Gastrocnemius medialis (tissue), 4 donors: ENCODE measurements at regions of chr11 and their contacts with region 1.

Region 1: DNA sequence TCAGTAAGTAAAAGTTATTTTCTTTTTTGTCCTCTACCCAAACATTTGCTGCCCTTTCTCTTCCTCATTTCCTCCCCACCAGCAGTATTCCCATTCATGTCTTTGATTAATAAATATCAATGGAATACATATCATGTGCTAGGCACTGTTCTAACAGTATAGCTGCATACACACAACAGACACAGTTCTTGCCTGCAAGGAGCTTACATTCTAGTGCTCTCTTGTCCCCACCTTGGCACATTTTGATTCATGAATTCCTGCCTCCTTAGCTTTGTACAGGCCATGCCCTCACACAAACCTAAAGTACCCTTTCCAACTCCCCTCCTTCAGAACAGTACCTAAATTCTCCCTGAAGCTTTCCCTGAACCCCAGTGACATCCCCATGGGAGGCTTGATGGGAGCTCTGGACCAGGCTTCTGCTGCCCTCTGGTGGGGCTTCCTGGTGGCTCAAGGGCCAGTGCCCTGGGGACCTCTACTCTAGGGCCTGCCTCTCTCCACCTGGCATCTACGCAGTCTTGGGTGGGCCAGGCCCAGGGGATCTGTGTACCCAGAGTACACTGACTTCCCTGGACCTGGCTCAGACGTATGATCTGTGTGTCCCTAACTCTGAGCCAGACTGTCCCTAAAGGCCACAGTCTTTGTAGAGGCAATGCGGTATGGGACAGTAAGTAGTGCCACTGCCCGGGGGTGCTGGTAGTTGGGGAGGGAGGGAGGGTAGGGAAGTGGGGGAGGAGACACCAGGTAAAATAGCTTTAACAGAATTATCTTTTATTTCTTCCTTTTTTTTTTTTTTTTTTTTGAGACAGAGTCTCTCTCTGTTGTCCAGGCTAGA is 14.1 kb downstream of the RPS13 start:
- DNase-seq: peak in 1 of 2 donors; percentile 31
- ATAC-seq: peak; percentile 68 to 80
- H3K4me3 ChIP-seq: no peak overlapping the region
- H3K27ac ChIP-seq: no peak overlapping the region
- H3K4me1 ChIP-seq: no peaks in the 10 kb centered on the region
- H3K27me3 ChIP-seq: no peaks in the 10 kb centered on the region
- CTCF ChIP-seq: peak; percentile 48 to 85 (median 77)
- POLR2A ChIP-seq: no peak

Region 2: DNA sequence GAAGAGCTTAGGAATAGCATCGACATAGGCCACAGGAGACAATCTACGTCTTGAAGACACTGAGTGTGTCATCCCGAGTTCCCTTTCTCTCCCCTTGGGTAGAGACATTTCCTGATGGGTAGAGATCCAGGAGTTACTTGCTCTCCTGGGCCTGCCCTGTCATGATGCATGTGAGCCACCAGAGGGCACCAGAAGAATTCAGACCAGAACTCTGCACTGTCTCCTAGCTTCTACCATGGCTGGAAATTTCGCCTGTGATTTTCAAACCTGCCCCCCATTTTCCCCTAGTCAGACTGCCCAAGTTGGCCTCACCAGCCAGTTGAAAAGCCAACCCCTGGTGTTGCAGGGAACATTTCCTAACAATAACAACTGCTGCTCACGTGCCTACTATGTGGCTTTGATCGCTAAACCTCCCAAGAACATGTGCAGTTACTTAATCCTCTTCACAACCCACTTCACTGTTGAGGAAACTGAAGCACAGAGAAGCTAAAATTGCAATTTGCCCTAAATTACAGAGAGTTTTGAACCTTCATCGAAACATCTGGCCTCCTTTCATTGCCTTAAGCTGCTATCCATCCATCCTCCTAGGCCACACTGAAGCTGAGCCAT is 277.8 kb before region 1 on chr11:
- in situ Hi-C with region 1: loop called in 1 of 4 experiments (anchors 10 kb)
- intact Hi-C with region 1: loop called (anchors 2 kb)
- DNase-seq: peak; percentile 46 to 56
- ATAC-seq: peak; percentile 78
- H3K4me3 ChIP-seq: no peak overlapping the region
- H3K27ac ChIP-seq: no peak overlapping the region
- H3K4me1 ChIP-seq: peaks cover 3% of the 10 kb centered on the region in 2 donors
- H3K27me3 ChIP-seq: no peaks in the 10 kb centered on the region
- CTCF ChIP-seq: peak; percentile 62 to 85 (median 75)
- POLR2A ChIP-seq: no peak

Region 3: GRCh38 chr11:16791191-16791961 is 272.0 kb before region 1 on chr11:
- in situ Hi-C with region 1: loop called in 1 of 4 experiments (anchors 10 kb)
- intact Hi-C with region 1: loop called (anchors 2 kb)
- DNase-seq: no peak
- ATAC-seq: peak; percentile 43 to 55
- H3K4me3 ChIP-seq: no peak overlapping the region
- H3K27ac ChIP-seq: no peak overlapping the region
- H3K4me1 ChIP-seq: peaks cover 3 to 8% of the 10 kb centered on the region in 2 donors
- H3K27me3 ChIP-seq: no peaks in the 10 kb centered on the region
- CTCF ChIP-seq: no peak
- POLR2A ChIP-seq: no peak

Region 4: DNA sequence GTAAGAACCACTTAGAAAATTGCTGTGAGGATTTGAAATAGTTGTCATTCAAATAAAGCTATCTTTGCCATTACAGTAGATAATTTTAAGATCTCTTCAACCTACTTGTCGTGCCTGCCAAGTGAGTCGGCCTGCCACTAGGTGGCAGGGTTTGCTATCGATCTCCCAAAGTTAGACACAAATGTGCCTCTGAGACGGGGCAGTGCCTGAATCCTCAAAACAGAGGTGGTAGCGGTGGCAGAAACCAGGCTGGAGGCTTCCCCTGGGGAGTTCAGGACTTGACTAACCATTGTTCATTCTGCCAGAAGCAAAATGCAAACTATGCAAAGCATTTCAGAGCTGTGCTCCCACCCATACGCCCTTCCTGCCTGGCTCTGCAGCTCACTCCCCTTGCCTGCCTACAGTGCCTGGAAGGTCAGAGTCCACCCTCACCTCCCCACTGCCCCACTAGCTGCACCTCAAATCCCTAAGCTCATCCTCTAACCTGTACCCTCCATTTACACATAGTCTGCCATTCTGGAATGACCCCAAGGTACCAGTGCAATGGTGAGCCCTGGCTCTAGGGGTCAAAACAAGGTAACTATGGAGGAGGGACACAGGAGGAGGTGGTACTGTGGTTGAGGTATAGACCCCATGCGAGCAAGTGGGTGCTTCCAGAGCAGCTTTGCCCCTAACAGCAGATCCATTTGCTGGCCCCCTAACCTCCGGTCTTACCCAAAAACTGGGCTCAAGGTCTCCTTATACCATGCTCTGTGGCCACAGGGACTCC is 242.9 kb before region 1 on chr11:
- in situ Hi-C with region 1: loop called in 3 of 4 experiments (anchors 25 kb)
- intact Hi-C with region 1: loop called (anchors 2 kb)
- DNase-seq: peak; percentile 48 to 69
- ATAC-seq: peak; percentile 72 to 84
- H3K4me3 ChIP-seq: no peak overlapping the region
- H3K27ac ChIP-seq: no peak overlapping the region
- H3K4me1 ChIP-seq: peaks cover 7 to 15% of the 10 kb centered on the region in 2 donors
- H3K27me3 ChIP-seq: no peaks in the 10 kb centered on the region
- CTCF ChIP-seq: peak; percentile 50 to 87 (median 75)
- POLR2A ChIP-seq: no peak

Region 5: GRCh38 chr11:16945671-16946469 is 117.5 kb before region 1 on chr11:
- in situ Hi-C with region 1: loop called in 3 of 4 experiments (anchors 5 to 10 kb)
- intact Hi-C with region 1: loop called (anchors 1 kb)
- DNase-seq: peak; percentile 21 to 25
- ATAC-seq: peak; percentile 72 to 75
- H3K4me3 ChIP-seq: no peak overlapping the region
- H3K27ac ChIP-seq: no peak overlapping the region
- H3K4me1 ChIP-seq: no peaks in the 10 kb centered on the region
- H3K27me3 ChIP-seq: no peaks in the 10 kb centered on the region
- CTCF ChIP-seq: peak; percentile 20 to 70 (median 60)
- POLR2A ChIP-seq: no peak

Region 6: DNA sequence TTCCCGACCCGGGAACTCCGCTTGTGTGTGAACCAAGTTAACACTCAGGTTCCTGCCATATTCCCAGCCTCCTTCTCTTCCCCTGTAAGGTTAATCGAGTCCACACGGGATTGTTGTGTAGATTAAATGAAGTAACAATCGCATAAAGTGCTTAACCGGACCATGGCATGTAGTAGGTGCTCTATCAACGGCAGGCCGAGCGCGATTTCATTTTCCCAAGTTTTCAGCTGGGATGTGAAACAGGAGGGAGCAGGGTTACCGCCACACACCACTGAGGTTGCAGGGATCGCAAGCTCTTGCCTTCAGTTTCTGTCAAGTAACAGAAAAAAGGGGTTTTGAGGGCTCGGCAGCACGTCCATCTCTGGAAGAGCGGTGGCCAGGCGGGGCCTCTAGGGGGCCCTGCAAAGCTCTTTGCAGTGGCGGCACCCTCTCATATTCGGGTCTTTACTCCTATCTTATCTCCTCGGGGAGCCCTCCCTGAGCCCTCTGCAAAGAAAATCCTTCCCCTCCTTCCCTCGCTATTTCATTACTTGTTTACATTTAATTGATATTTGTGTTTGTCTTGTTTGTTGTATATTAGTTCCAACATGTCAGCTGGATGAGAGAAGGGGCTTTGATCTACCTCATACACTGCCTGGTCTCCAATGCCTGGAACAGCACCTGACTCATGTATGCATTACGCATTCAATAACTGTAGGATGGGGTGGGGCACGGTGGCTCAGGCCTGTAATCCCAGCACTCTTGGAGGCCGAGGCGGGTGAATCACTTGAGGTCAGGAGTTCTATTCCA is 48.4 kb before region 1 on chr11:
- in situ Hi-C with region 1: no loop called
- intact Hi-C with region 1: no loop called
- DNase-seq: no peak
- ATAC-seq: peak in 1 of 2 donors; percentile 14
- H3K4me3 ChIP-seq: peak overlapping the region; percentile 41 to 65 (median 57)
- H3K27ac ChIP-seq: no peak overlapping the region
- H3K4me1 ChIP-seq: peaks cover 0 to 4% of the 10 kb centered on the region in 2 donors
- H3K27me3 ChIP-seq: peaks cover 0 to 8% (median 0%) of the 10 kb centered on the region in 3 donors
- CTCF ChIP-seq: peak in 1 of 5 experiments; percentile 35
- POLR2A ChIP-seq: no peak